Astrocyte of the cerebellum (primary cell): ENCODE measurements at regions of chr16 and their contacts with region 1.

Region 1: DNA sequence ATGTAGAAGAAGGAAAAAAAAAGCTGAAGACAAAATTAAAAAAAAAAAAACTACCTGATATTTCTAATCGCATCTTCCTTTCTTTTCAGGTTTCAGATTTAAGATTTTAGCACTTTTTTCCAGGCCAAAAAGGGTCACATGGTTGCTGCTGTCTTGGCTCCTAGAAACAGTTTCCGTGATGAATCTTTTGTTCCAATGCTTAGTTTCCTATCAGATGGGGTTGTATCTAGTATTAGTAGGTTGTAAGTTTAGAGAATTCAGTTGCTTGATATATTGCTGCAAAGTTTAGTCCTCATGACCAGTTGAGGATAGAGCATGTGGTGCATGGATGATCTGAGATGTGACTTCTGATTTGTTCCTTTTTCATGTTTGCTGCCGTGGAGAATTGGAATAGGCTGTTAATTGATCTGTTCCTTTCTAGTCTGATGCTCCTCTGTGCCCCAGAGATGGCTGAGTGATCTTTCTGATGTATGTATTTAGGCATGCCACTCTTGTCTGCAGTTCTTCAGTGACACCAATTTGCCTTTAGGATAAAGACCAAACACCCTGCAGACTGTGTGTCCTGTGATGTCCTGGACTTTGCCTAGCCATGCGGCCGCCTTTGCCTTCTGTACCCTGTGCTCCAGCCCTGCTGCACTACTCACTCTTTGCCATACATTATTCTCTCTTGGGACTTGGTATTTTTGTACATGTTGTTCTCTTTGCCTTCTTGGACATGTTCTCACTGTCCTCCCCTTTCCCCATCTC is 94.0 kb downstream of the MRTFB start:
- DNase-seq: no peak
- H3K4me3 ChIP-seq: no peak overlapping the region
- CTCF ChIP-seq: no peak

Region 2: GRCh38 chr16:14057878-14058382 is 107.2 kb before region 1 on chr16:
- in situ Hi-C with region 1: no loop called
- DNase-seq: peak; percentile 8
- H3K4me3 ChIP-seq: no peak overlapping the region
- CTCF ChIP-seq: no peak

Region 3: DNA sequence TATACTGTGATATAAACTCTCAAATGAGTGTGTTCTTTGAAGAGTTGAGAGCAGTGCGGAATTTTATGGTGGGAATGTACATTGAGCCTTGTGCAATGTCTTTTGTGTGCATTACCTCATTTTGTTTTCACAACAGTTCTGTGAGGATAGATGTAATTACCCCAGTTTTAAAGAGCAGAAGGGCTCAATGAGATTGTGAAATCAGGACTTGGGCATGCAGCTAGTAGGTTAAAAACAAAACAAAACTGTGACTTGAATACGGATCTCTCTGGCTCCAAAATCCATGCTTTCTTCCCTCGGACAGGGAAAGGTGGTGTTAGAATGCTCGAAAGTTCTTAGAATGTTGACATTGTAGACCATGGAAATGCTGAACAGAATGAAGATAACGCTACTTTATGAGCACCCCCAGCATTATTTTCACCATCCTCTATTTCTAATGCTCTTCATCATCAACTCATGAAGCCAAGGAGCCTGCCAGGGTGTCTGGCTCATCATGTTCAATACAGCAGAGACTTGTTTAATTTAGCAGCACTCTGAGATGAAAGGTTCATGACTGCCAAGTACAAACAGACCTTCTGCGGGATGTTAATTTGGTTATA is 76.8 kb before region 1 on chr16:
- in situ Hi-C with region 1: loop called (anchors 5 kb)
- DNase-seq: no peak
- H3K4me3 ChIP-seq: no peak overlapping the region
- CTCF ChIP-seq: no peak

Region 4: DNA sequence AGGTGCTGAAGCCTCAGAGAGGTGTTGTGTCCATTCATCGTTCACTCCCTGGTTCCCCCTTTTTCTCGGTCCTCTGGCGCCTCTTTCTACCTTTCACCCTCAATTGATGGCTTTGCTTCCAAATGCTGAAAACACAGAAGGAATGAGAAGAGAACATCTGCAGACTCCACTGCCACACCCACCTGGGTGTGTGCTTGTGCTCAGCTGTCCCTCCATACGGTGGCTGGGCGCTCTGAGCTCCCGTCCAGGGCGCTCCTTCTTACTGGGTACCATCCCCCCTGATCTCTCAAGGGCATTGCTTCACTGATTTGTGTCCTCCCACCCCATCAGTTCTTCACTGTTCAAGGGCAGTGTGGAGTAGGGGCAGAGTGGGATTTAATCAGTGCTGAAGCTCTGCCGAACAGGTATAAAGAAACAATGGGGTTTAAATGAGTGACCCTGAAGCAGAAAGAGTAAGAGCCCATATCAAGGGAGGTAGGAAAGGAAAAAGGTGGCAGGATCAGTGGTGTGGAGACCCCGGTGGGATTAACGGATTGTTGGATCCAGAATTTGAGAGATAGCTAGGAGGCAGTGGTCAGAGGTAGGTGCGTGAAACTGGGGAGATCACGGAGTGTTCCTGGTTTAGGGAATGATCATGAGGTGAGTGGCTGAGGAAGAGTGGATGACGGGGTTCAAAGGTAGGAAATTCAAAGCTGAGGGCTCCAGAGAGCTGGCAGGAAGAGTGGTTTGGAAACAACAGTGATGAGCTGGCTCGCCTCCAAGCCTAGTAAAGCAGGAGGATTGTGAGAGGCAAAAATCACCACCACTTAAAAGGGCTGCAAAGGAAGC is 53.2 kb before region 1 on chr16:
- in situ Hi-C with region 1: loop called (anchors 5 kb)
- DNase-seq: peak; percentile 15
- H3K4me3 ChIP-seq: no peak overlapping the region
- CTCF ChIP-seq: no peak

Region 5: GRCh38 chr16:14125000-14125681 is 39.9 kb before region 1 on chr16:
- in situ Hi-C with region 1: no loop called
- DNase-seq: no peak
- H3K4me3 ChIP-seq: no peak overlapping the region
- CTCF ChIP-seq: no peak

Region 6: GRCh38 chr16:14232106-14232864 is 67.2 kb after region 1 on chr16:
- in situ Hi-C with region 1: no loop called
- DNase-seq: peak; percentile 39
- H3K4me3 ChIP-seq: no peak overlapping the region
- CTCF ChIP-seq: no peak

Region 7: GRCh38 chr16:14263011-14263410 is 97.9 kb after region 1 on chr16:
- in situ Hi-C with region 1: no loop called
- DNase-seq: no peak
- H3K4me3 ChIP-seq: no peak overlapping the region
- CTCF ChIP-seq: no peak